CD4-positive, alpha-beta memory T cell (primary cell): ENCODE measurements at regions of chr5 and their contacts with region 1.

Region 1: DNA sequence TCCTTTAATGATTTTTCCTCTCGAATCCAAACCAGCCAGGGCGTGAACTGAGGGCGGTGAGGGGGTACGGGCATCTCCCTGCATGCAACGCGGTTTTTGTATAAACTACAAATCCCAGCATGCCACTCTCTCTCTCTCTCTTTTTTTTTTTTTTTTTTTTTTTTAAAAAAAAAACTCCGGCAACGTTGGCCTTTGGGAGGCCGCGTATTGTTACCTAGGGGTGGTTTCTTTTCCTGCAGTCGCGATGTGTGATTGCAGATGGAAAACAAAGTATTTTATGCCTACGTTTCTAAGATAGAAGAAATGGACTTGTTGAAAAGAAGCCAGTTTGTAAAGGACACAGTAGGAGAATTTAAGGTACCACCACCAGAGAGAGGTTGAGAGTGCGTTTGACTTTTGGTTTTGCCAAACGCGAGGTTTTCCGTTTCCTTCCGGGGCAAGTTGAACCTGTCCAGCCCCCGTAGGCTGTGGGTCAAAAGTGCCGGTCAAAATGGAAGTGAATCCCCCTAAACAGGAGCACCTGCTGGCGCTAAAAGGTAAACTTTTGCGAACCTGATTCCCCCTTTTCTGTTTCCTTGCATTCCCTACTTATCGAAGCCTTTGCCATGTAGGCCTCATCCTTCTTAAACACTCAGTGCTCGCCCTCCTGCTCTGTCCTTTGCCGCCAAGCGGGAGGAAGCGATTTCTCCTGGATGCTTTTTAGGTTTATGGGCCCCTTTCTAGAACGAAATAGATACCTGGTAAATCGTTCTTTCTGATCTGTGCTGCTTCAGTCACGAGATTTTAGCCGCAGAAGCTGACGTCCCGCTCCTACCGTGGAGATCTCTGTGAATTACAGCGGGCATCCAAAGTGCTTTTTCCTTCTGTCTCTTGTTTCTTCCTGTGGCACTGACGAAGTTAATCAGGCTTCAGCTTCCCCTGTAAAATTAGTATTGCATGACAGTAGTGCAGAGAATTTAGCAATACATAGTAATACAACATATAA is at the starts of genes SHLD3 and TRAPPC13:
- DNase-seq: peak; percentile 90 to 93 (median 92)
- H3K4me3 ChIP-seq: peak within 1 kb of the TSS; percentile 74 to 98
- H3K4me3 Mint-ChIP-seq: peak within 1 kb of the TSS; percentile 96 to 100 (median 99)
- H3K27ac ChIP-seq: peak within 1 kb of the TSS; percentile 79
- H3K27ac Mint-ChIP-seq: peak within 1 kb of the TSS; percentile 97 to 100 (median 99)
- H3K4me1 ChIP-seq: peaks cover 34% of the 10 kb centered on the region
- H3K4me1 Mint-ChIP-seq: peaks cover 28 to 68% (median 42%) of the 10 kb centered on the region in 4 donors
- H3K27me3 ChIP-seq: no peaks in the 10 kb centered on the region
- H3K27me3 Mint-ChIP-seq: peaks cover 2 to 3% of the 10 kb centered on the region in 2 donors
- total RNA-seq, gene SHLD3: 6.1 to 7.4 TPM
- total RNA-seq, gene TRAPPC13: 20.9 TPM

Region 2: GRCh38 chr5:64768358-64769312 is 856.2 kb before region 1 on chr5 and contains the starts of genes CWC27 and SREK1IP1:
- CTCF ChIA-PET with region 1: no interaction called
- POLR2A ChIA-PET with region 1: interaction called, 4 read pairs
- intact Hi-C with region 1: loop called (anchors 2 kb)
- DNase-seq: peak; percentile 85 to 88 (median 85)
- H3K4me3 ChIP-seq: peak within 1 kb of the TSS; percentile 83 to 94
- H3K4me3 Mint-ChIP-seq: peak within 1 kb of the TSS; percentile 98 to 100 (median 100)
- H3K27ac ChIP-seq: peak within 1 kb of the TSS; percentile 86
- H3K27ac Mint-ChIP-seq: peak within 1 kb of the TSS; percentile 95 to 100 (median 98)
- H3K4me1 ChIP-seq: peaks cover 47% of the 10 kb centered on the region
- H3K4me1 Mint-ChIP-seq: peaks cover 49 to 82% (median 57%) of the 10 kb centered on the region in 4 donors
- H3K27me3 ChIP-seq: no peaks in the 10 kb centered on the region
- H3K27me3 Mint-ChIP-seq: no peaks in the 10 kb centered on the region
- total RNA-seq, gene CWC27: 16.8 to 17.8 TPM
- total RNA-seq, gene SREK1IP1: 18.4 to 20.2 TPM

Region 3: GRCh38 chr5:65035211-65036206 is 589.4 kb before region 1 on chr5:
- CTCF ChIA-PET with region 1: no interaction called
- POLR2A ChIA-PET with region 1: no interaction called
- intact Hi-C with region 1: loop called (anchors 1 kb)
- DNase-seq: peak; percentile 86 to 94 (median 90)
- H3K4me3 ChIP-seq: peak overlapping the region; percentile 66 to 74
- H3K4me3 Mint-ChIP-seq: peak overlapping the region; percentile 66 to 92 (median 84)
- H3K27ac ChIP-seq: peak overlapping the region; percentile 90
- H3K27ac Mint-ChIP-seq: peak overlapping the region; percentile 80 to 100 (median 95)
- H3K4me1 ChIP-seq: peaks cover 30% of the 10 kb centered on the region
- H3K4me1 Mint-ChIP-seq: peaks cover 18 to 38% (median 28%) of the 10 kb centered on the region in 4 donors
- H3K27me3 ChIP-seq: no peaks in the 10 kb centered on the region
- H3K27me3 Mint-ChIP-seq: no peaks in the 10 kb centered on the region

Region 4: GRCh38 chr5:65588694-65589093 is 36.2 kb before region 1 on chr5:
- CTCF ChIA-PET with region 1: no interaction called
- POLR2A ChIA-PET with region 1: no interaction called
- intact Hi-C with region 1: loop called (anchors 5 kb)
- DNase-seq: no peak
- H3K4me3 ChIP-seq: no peak overlapping the region
- H3K4me3 Mint-ChIP-seq: no peak overlapping the region
- H3K27ac ChIP-seq: no peak overlapping the region
- H3K27ac Mint-ChIP-seq: no peak overlapping the region
- H3K4me1 ChIP-seq: no peaks in the 10 kb centered on the region
- H3K4me1 Mint-ChIP-seq: peaks cover 0 to 2% (median under 1%) of the 10 kb centered on the region in 4 donors
- H3K27me3 ChIP-seq: no peaks in the 10 kb centered on the region
- H3K27me3 Mint-ChIP-seq: no peaks in the 10 kb centered on the region

Region 5: DNA sequence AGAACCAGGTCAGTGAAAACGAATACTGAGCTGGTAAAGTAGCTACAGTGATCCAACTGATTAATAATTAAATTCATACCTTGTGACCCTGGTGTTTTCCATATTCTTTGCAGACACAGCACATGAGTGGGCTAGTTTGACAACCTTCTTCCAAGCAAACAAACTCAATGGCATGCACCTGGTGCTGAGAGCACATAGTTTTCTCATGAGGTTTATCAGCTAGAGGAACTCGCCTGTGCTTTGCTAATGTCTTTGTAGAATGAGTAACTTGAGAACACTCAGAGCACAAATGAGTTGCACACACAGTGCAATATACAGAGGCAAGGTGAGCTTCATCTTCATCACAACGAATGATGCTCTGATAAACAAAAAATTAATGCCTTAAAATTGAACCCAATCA is 13.3 kb before region 1 on chr5:
- CTCF ChIA-PET with region 1: interaction called, 5 read pairs
- POLR2A ChIA-PET with region 1: interaction called, 10 read pairs
- intact Hi-C with region 1: no loop called
- DNase-seq: no peak
- H3K4me3 ChIP-seq: no peak overlapping the region
- H3K4me3 Mint-ChIP-seq: no peak overlapping the region
- H3K27ac ChIP-seq: no peak overlapping the region
- H3K27ac Mint-ChIP-seq: peak overlapping the region in 1 of 7 donors; percentile 57
- H3K4me1 ChIP-seq: no peaks in the 10 kb centered on the region
- H3K4me1 Mint-ChIP-seq: peaks cover 5 to 13% (median 12%) of the 10 kb centered on the region in 4 donors
- H3K27me3 ChIP-seq: no peaks in the 10 kb centered on the region
- H3K27me3 Mint-ChIP-seq: no peaks in the 10 kb centered on the region

Region 6: GRCh38 chr5:65721720-65722574 is 97.1 kb after region 1 on chr5 and contains the starts of genes NLN and SGTB:
- CTCF ChIA-PET with region 1: no interaction called
- POLR2A ChIA-PET with region 1: interaction called, 23 read pairs
- intact Hi-C with region 1: loop called (anchors 1 kb)
- DNase-seq: peak; percentile 78 to 86 (median 82)
- H3K4me3 ChIP-seq: peak within 1 kb of the TSS; percentile 57 to 64
- H3K4me3 Mint-ChIP-seq: peak within 1 kb of the TSS; percentile 88 to 98 (median 94)
- H3K27ac ChIP-seq: peak within 1 kb of the TSS; percentile 91
- H3K27ac Mint-ChIP-seq: peak within 1 kb of the TSS in 6 of 7 donors; percentile 75 to 93 (median 90)
- H3K4me1 ChIP-seq: peaks cover 46% of the 10 kb centered on the region
- H3K4me1 Mint-ChIP-seq: peaks cover 9 to 22% (median 14%) of the 10 kb centered on the region in 4 donors
- H3K27me3 ChIP-seq: no peaks in the 10 kb centered on the region
- H3K27me3 Mint-ChIP-seq: no peaks in the 10 kb centered on the region
- total RNA-seq, gene NLN: 2.3 to 2.4 TPM
- total RNA-seq, gene SGTB: 42.6 to 46.5 TPM

Region 7: DNA sequence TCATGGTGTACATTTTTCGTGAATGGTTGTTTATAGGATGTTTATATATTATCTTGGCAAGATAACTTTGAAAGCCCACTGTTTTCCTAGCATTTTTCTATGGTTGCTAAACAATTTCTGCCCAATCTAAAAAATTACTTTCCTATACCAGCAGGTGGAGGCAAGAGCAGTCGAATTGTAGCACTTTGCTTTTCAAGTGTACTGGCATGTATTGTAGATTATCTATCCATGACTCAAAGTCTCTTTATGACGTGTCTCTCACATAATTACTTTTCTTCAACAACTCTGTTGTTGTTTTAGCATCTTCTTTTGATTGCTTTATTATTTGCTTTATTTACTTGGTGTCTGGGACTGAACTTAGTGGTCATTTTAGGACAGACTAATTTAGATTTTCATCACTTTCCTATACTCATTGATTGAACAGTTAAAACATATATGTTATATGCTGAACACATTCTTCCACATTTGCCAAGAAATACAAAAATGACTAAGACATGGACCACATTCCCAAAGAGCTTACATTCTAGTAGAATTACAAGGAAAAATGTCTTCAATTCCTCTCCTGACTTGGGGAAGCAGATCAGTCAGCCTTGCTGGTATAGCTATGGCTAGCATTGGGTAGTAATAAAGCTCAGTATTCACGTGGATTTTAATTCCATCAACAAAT is 117.8 kb after region 1 on chr5:
- CTCF ChIA-PET with region 1: no interaction called
- POLR2A ChIA-PET with region 1: no interaction called
- intact Hi-C with region 1: no loop called
- DNase-seq: peak in 4 of 5 donors; percentile 15 to 30 (median 17)
- H3K4me3 ChIP-seq: no peak overlapping the region
- H3K4me3 Mint-ChIP-seq: no peak overlapping the region
- H3K27ac ChIP-seq: no peak overlapping the region
- H3K27ac Mint-ChIP-seq: peak overlapping the region in 1 of 7 donors; percentile 1
- H3K4me1 ChIP-seq: no peaks in the 10 kb centered on the region
- H3K4me1 Mint-ChIP-seq: peaks cover 0 to 6% (median 0%) of the 10 kb centered on the region in 4 donors
- H3K27me3 ChIP-seq: no peaks in the 10 kb centered on the region
- H3K27me3 Mint-ChIP-seq: no peaks in the 10 kb centered on the region